Prostate gland (tissue), 2 donors: ENCODE measurements at regions of chr2 and their contacts with region 1.

Region 1: DNA sequence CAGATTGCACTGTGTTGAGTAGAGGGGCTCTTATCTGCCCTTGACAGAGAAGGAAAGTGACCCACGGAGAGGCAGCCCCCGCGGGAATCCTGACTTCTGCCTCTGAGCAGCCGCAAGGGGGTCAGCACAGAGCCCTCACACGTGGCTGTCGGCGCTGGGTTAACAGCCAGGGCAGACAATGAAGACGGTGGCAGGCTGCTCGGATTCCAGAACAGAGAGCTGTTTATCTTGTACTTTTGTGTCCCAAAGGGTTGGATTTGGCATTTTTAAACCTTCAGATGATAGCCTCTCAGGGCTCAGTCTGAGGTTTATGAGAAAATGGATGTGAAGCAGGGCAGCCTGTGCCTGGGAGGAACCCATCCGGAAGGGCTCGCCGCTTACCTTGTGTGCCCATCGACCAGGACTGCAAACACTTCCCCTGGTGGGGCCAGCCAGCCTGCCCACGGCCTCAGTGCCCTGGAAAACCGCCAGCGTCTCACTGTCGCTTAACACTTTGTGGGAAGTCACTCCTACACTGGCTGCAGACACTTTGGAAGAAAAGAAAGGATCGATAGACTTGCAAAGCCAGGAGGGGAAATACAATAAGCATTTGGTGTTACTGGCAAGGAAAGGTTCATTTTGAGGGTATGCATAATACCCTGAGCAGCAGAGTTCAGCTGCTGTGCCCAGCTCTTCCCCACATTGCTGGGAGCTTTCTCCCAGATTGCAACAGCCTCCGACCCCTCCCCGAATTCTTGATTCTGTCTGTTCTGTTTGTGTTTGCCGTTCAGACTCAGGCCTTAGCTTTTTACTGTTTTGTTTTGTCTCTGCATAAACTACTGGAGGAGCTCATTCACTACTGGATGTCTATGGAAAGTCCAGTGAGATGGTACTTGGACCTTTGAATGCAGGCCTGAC is 325.3 kb upstream of the MYT1L start:
- DNase-seq: no peak
- H3K4me3 ChIP-seq: no peak overlapping the region
- H3K27ac ChIP-seq: no peak overlapping the region
- H3K4me1 ChIP-seq: peaks cover 4% of the 10 kb centered on the region
- H3K27me3 ChIP-seq: no peaks in the 10 kb centered on the region
- CTCF ChIP-seq: no peak
- POLR2A ChIP-seq: no peak

Region 2: GRCh38 chr2:1675633-1676032 is 980.7 kb before region 1 on chr2:
- intact Hi-C with region 1: no loop called
- DNase-seq: peak; percentile 74
- H3K4me3 ChIP-seq: no peak overlapping the region
- H3K27ac ChIP-seq: peak overlapping the region; percentile 79 to 80
- H3K4me1 ChIP-seq: no peaks in the 10 kb centered on the region
- H3K27me3 ChIP-seq: no peaks in the 10 kb centered on the region
- CTCF ChIP-seq: peak in 1 of 4 experiments; percentile 42
- POLR2A ChIP-seq: no peak

Region 3: DNA sequence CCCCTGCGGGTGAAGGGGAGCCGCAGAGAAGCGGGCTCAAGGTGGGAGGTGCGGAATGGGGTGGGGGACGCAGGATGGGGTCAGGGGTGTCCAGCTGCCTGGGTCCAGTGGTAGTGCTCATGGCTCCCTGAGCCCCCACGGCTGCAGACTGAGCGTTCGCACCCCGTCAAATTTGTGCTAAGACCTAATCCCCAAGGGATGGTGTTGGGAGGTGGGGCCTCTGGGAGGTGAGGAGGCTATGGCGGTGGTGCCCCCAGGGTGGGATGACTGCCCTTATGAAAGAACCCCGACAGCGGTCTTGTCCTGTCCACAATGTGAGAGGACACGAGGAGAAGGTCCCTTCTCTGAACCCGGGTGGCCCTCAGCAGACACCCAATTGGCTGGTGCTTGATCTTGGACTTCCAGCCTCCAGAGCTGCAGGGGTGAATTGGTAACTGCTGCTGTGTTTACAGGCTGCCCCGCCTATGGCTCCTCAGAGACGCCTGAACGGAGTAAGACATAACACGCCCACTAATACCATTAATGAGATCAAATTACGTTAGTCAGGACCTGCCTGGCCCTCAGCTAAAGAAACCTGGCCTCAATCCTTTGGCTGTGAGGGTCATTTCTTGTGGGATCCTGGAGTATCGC is 954.7 kb before region 1 on chr2:
- intact Hi-C with region 1: no loop called
- DNase-seq: no peak
- H3K4me3 ChIP-seq: no peak overlapping the region
- H3K27ac ChIP-seq: peak overlapping the region in 1 of 2 donors; percentile 44
- H3K4me1 ChIP-seq: peaks cover 2% of the 10 kb centered on the region
- H3K27me3 ChIP-seq: no peaks in the 10 kb centered on the region
- CTCF ChIP-seq: no peak
- POLR2A ChIP-seq: no peak

Region 4: GRCh38 chr2:2456721-2457120 is 199.6 kb before region 1 on chr2:
- intact Hi-C with region 1: no loop called
- DNase-seq: no peak
- H3K4me3 ChIP-seq: no peak overlapping the region
- H3K27ac ChIP-seq: no peak overlapping the region
- H3K4me1 ChIP-seq: no peaks in the 10 kb centered on the region
- H3K27me3 ChIP-seq: no peaks in the 10 kb centered on the region
- CTCF ChIP-seq: no peak
- POLR2A ChIP-seq: no peak

Region 5: DNA sequence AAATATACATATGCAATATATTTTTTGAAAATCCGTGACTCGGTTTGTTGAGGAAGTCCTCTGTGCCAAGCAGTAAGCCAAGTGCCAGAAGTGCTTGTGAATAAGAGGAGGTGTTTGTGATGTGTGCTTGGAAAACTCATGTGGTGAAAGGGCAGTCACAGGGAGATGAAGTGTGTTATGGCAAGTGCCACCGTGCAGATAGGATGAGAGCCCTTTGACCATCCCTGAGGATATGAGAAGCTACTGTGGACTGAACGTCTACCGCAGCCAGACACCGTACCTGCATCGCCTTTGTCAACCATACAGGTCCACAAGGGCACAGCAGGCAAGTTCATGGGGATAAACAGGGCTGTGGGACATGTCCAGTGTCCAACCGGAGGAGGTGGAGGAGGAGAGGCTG is 36.4 kb before region 1 on chr2:
- intact Hi-C with region 1: loop called (anchors 5 kb)
- DNase-seq: no peak
- H3K4me3 ChIP-seq: no peak overlapping the region
- H3K27ac ChIP-seq: no peak overlapping the region
- H3K4me1 ChIP-seq: no peaks in the 10 kb centered on the region
- H3K27me3 ChIP-seq: no peaks in the 10 kb centered on the region
- CTCF ChIP-seq: no peak
- POLR2A ChIP-seq: no peak

Region 6: DNA sequence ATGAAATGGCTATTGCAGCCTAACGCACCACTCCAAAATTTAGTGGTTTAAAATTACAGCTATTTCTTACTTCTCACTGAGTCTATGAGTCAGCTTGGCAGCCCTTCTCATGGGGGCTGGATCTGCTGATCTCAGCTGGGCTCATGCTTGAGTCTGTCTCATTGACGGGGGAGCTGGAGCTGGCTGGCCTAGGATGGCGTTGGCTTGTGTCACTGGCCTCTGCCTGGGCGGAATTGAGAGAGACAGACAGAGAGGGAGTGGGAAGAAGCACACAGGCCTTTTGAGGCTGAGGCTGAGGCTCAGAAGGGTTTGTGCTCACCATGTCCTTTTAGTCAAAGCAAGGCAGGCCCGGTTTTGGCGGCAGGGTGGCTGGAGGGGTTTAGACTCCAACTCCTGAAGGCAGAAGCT is 86.8 kb after region 1 on chr2:
- intact Hi-C with region 1: no loop called
- DNase-seq: no peak
- H3K4me3 ChIP-seq: no peak overlapping the region
- H3K27ac ChIP-seq: no peak overlapping the region
- H3K4me1 ChIP-seq: no peaks in the 10 kb centered on the region
- H3K27me3 ChIP-seq: no peaks in the 10 kb centered on the region
- CTCF ChIP-seq: no peak
- POLR2A ChIP-seq: no peak